Activated T-helper 2 cell treated with anti-CD3 and anti-CD28 coated beads, Interferon-gamma antibody, Interleukin-2, Interleukin-4, amounts not matched to agents 10 μg/mL and 5 μg/mL and 100 μg/mL, durations not matched to agents 14 hours and 24 hours and 36 hours (primary cell): ENCODE measurements at regions of chr11 and their contacts with region 1.

Region 1: DNA sequence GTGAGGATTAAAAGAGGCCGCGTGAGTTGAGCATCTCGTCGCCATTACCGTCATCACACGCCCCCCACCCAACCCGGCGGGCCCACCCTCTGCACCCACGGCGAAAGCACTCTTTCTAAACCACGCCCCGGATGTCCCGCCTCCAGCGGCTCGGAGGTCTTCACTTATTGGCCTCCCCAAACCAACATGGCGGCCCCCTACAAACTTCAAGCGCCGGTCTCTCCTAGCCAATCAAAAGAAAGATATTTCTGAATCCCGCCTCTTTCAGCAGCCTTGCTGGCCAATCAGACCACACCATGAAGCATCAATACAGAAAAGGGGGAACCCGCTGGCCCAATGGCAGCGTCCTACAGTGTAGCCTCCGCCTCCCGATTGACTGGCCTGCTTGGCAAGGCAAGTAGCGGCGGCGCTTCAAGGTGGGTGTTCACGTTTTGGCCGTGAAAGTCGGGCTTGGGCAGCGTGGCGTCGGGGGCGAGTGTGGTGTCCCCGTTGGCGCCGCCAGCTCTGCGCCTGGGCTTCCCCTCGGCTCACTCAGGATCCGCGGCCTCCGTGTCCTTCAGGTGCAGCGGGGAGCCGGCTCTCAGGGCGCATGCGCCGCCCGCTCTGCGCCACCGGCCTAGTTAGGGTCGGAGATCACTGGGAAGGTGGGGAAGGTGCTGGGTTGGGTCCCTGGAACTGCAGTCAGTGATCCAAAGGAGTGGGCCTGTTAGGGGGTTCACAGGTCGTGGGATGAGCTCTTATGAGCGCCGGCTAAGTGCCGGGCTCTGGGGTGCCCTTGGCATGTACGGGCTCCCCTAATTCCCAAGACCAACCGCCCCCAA is at the start of gene NDUFS8:
- DNase-seq: peak; percentile 95
- H3K4me3 Mint-ChIP-seq: peak within 1 kb of the TSS; percentile 97
- H3K27ac Mint-ChIP-seq: peak within 1 kb of the TSS; percentile 95
- H3K4me1 Mint-ChIP-seq: peaks cover 23% of the 10 kb centered on the region
- H3K27me3 Mint-ChIP-seq: no peaks in the 10 kb centered on the region
- total RNA-seq, gene NDUFS8: 125 and 139 TPM in 2 replicates

Region 2: DNA sequence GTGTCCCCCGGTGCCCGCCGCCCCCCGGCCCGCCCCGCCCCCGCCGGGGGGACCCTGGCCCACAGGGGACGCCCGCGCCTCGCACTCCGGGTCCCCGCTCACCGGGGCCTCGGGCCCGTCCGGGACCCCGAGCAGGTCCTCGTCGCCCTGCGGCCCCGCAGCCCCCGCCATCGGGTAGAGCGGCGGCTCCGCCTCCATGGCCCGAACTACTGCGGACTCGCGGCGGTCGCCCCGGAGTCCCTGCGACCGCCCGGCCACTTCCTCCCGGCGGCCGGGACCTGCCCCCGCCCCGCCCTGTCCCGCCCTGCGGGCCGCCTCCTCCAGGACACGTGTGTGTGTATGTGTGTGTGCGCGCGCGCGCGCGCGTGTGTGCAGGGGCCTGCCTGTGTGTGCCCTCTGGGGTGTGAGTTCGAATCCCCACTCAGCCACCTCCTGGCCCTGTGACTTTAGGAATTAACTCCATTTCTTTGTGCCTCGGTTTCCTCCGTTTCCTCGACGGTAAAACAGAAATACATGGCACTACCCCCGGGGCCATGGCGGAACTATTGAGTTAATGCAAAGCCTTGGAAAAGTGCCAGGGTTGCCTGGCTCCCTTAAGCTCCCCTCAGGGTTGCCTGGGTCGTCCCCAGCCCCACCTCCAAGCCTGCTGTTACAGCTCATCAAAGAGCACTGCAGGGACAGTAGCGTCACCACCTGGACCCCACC is 26.5 kb before region 1 on chr11 and contains the start of gene UNC93B1:
- intact Hi-C with region 1: loop called (anchors 1 kb)
- DNase-seq: peak; percentile 79
- H3K4me3 Mint-ChIP-seq: peak within 1 kb of the TSS; percentile 78
- H3K27ac Mint-ChIP-seq: peak within 1 kb of the TSS; percentile 78
- H3K4me1 Mint-ChIP-seq: peaks cover 16% of the 10 kb centered on the region
- H3K27me3 Mint-ChIP-seq: no peaks in the 10 kb centered on the region
- total RNA-seq, gene UNC93B1: 12.3 and 14.1 TPM in 2 replicates

Region 3: DNA sequence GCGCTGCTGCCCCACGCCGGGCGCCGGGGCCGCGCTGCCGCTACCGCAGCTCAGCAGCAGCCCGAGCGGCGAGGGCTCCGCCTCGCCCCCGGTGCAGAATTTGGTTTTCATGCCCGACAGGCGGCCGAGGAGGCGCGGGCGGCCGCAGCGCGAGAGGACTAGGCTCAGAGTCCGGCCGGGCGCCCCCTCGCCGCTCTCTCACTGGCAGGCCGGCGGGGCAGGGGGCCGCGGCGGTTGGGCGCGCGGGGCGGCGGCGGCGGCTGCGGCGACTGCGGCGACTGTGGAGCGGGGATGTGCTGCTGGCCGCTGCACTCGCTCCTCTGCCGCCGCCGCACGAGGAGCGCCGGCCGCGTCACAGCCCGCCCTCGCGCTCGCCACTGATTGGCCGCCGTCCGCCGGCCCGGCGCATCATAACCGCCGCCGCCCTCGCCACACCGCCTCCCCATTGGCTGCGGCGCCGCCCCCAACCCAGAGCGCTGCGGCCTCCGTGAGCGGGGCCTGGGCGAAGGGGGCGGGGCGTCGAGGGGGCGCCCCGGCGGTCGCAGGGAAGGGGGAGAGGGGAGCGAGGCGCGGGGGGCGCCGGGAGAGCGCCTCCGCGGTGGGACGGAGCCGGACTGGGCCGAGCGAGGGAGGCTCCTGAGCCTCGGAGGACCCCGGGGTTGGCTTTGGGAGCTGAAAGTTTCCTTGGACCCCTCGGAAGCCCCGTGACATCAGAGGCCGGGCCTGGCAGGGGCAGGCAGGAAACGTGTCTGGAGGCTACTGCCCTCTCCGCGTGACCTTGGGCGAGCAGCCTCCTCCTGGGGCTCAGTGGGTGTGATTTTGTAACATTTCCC is 90.8 kb after region 1 on chr11 and contains the start of gene CHKA:
- intact Hi-C with region 1: loop called (anchors 2 kb)
- DNase-seq: peak; percentile 84
- H3K4me3 Mint-ChIP-seq: peak within 1 kb of the TSS; percentile 88
- H3K27ac Mint-ChIP-seq: peak within 1 kb of the TSS; percentile 89
- H3K4me1 Mint-ChIP-seq: peaks cover 12% of the 10 kb centered on the region
- H3K27me3 Mint-ChIP-seq: no peaks in the 10 kb centered on the region
- total RNA-seq, gene CHKA: 16.9 and 20.4 TPM in 2 replicates

Region 4: GRCh38 chr11:68164437-68164836 is 133.9 kb after region 1 on chr11:
- intact Hi-C with region 1: no loop called
- DNase-seq: no peak
- H3K4me3 Mint-ChIP-seq: no peak overlapping the region
- H3K27ac Mint-ChIP-seq: no peak overlapping the region
- H3K4me1 Mint-ChIP-seq: no peaks in the 10 kb centered on the region
- H3K27me3 Mint-ChIP-seq: no peaks in the 10 kb centered on the region

Region 5: GRCh38 chr11:68266121-68266891 is 235.8 kb after region 1 on chr11:
- intact Hi-C with region 1: no loop called
- DNase-seq: no peak
- H3K4me3 Mint-ChIP-seq: no peak overlapping the region
- H3K27ac Mint-ChIP-seq: no peak overlapping the region
- H3K4me1 Mint-ChIP-seq: peaks cover 25% of the 10 kb centered on the region
- H3K27me3 Mint-ChIP-seq: no peaks in the 10 kb centered on the region